ENCODE measurements at regions of chr12 and their contacts with region 1.

Region 1: DNA sequence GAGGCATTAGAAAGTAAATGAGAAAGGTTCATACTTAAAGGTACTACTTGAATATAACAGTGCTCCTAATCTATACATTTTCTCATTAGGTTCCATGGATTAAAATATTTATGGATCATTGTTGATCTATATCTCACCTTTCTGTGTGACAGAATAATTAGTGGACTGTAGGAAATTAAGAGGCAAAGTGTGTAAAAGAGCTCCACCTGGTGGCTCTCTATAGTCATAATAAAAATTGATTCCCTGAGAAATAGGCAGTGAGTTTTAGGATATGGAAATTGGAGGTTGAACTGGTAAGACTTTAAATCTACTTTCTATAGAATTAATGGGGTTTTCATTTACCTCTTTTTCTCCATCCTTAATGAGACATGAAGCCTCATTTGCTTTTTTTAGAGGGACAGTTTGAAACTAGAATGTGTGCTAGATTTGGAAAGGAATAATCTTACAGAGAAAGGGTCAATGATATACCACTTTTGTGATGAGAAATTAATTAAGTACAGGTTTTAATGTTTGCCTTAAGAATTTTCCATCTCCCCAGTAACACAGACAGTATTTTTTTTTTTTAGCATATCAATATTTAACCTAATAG is 11.8 kb upstream of the DERA start:
- DNase-seq: no peak
- H3K4me3 ChIP-seq: no peak overlapping the region
- H3K27ac ChIP-seq: no peak overlapping the region
- H3K4me1 ChIP-seq: no peaks in the 10 kb centered on the region
- H3K27me3 ChIP-seq: no peaks in the 10 kb centered on the region
- CTCF ChIP-seq: peak in 1 of 3 experiments; percentile 44; a peak in 2 of 4 replicates
- EP300 ChIP-seq: no peak
- POLR2A ChIP-seq: no peak
- RAD21 ChIP-seq: peak; percentile 39 to 43

Region 2: GRCh38 chr12:15910864-15911721 is 11.7 kb after region 1 on chr12 and contains the start of gene DERA:
- CTCF ChIA-PET with region 1: interaction called, 11 read pairs
- POLR2A ChIA-PET with region 1: interaction called, 6 read pairs
- DNase-seq: peak; percentile 38 to 90
- H3K4me3 ChIP-seq: peak within 1 kb of the TSS; percentile 67 to 88 (median 81)
- H3K27ac ChIP-seq: peak within 1 kb of the TSS; percentile 60; the same call in 1 of the 2 replicates
- H3K4me1 ChIP-seq: no peaks in the 10 kb centered on the region; a peak in 1 of 7 replicates
- H3K27me3 ChIP-seq: no peaks in the 10 kb centered on the region
- CTCF ChIP-seq: no peak
- EP300 ChIP-seq: no peak
- POLR2A ChIP-seq: peak; percentile 82 to 96
- RAD21 ChIP-seq: no peak
- total RNA-seq, gene DERA: 17.1 and 17.5 TPM in 2 replicates

Region 3: DNA sequence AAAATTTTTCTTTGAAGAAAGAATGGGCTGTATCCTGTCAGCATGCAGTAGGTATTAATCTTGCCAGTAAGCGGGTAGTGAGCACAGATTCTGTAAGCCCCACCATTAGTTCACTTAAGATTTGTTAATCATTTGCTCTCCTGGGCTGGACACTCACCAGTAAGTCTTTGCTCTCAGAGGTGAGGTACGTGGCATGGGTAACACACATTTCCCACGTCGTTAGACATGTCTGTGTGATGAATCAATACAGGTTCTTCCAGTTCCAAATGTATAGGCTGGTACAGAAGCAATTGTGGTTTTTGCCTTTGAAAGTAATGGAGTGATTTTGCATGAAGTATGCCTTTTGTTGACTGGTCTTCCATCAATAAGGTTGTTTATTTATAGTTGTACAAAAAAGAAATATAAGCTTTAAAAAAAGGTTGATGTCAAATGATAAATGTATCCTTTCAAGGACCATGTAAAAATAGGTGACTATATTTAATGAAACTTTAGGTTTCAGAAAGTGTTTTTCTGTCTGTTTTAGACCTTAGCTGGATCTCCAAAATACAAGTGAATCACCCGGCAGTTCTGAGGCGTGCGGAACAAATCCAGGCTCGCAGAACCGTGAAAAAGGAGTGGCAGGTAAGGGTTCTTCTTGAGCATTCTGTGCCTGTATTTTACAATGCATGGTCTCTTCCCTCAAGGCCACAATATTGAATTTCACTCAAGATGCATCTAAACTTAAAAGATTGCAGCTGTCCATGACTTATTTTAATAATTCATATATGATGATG is 57.2 kb after region 1 on chr12:
- CTCF ChIA-PET with region 1: no interaction called
- POLR2A ChIA-PET with region 1: no interaction called
- DNase-seq: no peak
- H3K4me3 ChIP-seq: no peak overlapping the region
- H3K27ac ChIP-seq: no peak overlapping the region
- H3K4me1 ChIP-seq: no peaks in the 10 kb centered on the region
- H3K27me3 ChIP-seq: no peaks in the 10 kb centered on the region
- CTCF ChIP-seq: no peak
- EP300 ChIP-seq: no peak
- POLR2A ChIP-seq: no peak
- RAD21 ChIP-seq: no peak